ENCODE measurements at regions of chrX and their contacts with region 1.

Region 1: GRCh38 chrX:46758906-46759644 is at the start of gene SLC9A7:
- DNase-seq: peak; percentile 85
- H3K4me3 ChIP-seq: peak within 1 kb of the TSS; percentile 97
- H3K27ac ChIP-seq: peak within 1 kb of the TSS; percentile 99
- H3K4me1 ChIP-seq: peaks cover 39% of the 10 kb centered on the region
- CTCF ChIP-seq: peak; percentile 68
- total RNA-seq, gene SLC9A7: 34.2 and 40.5 TPM in 2 replicates

Region 2: GRCh38 chrX:46573331-46573891 is 185.7 kb before region 1 on chrX and contains the start of gene CHST7:
- CTCF ChIA-PET with region 1: no interaction called
- POLR2A ChIA-PET with region 1: no interaction called
- intact Hi-C with region 1: loop called (anchors 5 kb)
- DNase-seq: peak; percentile 77
- H3K4me3 ChIP-seq: peak within 1 kb of the TSS; percentile 74
- H3K27ac ChIP-seq: peak within 1 kb of the TSS; percentile 80
- H3K4me1 ChIP-seq: peaks cover 33% of the 10 kb centered on the region
- CTCF ChIP-seq: peak; percentile 70
- total RNA-seq, gene CHST7: 5.3 and 7.5 TPM in 2 replicates

Region 3: DNA sequence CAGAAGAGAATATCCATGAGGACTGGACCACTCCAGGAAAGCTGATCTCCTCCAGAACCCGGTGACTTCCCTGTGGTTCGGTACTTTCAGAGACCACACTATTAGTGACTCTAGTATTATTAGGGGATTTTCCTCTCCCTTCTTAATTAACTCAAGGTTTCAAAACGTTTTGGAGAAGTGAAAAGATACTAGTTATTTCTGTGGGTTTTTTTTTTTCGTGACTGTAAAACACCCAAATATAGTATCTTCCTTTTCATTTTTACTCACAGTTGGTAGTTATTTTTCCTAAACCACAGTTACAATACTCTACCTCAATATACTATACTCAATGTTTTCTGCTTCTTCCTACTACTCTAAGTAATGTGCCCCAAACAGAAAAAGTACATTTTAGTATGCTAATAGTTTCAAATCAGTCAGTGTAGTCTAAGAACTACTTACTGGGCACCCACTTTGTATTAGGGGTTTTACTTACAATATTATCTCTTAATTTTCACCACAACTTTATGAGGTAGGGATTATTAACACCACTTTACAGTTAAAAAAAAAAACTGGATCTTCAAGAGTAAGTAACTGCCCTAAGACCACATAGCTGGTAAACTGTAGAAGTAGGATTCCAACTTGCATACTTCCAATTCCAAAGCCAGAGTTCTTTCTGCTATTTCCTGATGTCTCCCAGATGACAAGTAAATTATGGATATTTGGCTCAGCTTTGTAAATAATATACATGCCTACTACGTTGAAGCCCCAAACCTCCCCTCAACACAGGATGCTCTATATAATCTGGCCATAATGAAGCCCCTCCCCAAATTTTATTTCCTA is 45.2 kb before region 1 on chrX:
- CTCF ChIA-PET with region 1: no interaction called
- POLR2A ChIA-PET with region 1: interaction called, 3 read pairs
- intact Hi-C with region 1: loop called (anchors 1 kb)
- DNase-seq: no peak
- H3K4me3 ChIP-seq: peak overlapping the region; percentile 56
- H3K27ac ChIP-seq: peak overlapping the region; percentile 93
- H3K4me1 ChIP-seq: peaks cover 84% of the 10 kb centered on the region
- CTCF ChIP-seq: no peak

Region 4: GRCh38 chrX:46836701-46837557 is 77.9 kb after region 1 on chrX and contains the start of gene RP2:
- CTCF ChIA-PET with region 1: no interaction called
- POLR2A ChIA-PET with region 1: no interaction called
- intact Hi-C with region 1: loop called (anchors 2 kb)
- DNase-seq: peak; percentile 95
- H3K4me3 ChIP-seq: peak within 1 kb of the TSS; percentile 90
- H3K27ac ChIP-seq: peak within 1 kb of the TSS; percentile 71
- H3K4me1 ChIP-seq: peaks cover 58% of the 10 kb centered on the region
- CTCF ChIP-seq: no peak
- total RNA-seq, gene RP2: 12.0 and 12.7 TPM in 2 replicates

Region 5: DNA sequence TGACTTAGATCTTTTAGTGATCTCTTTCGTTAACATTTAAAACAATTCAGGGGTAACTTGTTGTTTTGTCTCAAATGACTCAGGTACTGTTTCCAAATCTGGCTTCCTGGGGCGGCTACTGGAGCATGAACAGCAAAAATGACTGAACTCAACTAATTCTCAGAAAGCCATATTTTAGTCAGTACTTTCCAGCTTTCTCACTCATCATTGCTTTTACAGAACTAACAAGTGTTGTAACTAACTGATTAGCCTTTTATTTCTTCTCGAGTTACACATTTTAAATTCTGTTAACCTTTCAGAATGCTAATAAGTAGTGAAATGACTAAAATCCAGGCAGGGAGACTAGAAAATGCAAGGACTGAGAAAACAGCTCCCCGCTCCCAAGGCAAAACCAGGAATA is 208.5 kb after region 1 on chrX:
- CTCF ChIA-PET with region 1: no interaction called
- POLR2A ChIA-PET with region 1: no interaction called
- intact Hi-C with region 1: loop called (anchors 5 kb)
- DNase-seq: peak; percentile 33
- H3K4me3 ChIP-seq: peak overlapping the region; percentile 48
- H3K27ac ChIP-seq: peak overlapping the region; percentile 25
- H3K4me1 ChIP-seq: peaks cover 79% of the 10 kb centered on the region
- CTCF ChIP-seq: no peak

Measured in OCI-LY7 (cell line).